Aorta (tissue), 5 donors: ENCODE measurements at regions of chr2 and their contacts with region 1.

Region 1: GRCh38 chr2:197813093-197813787 is 8.8 kb downstream of the PLCL1 start:
- DNase-seq: no peak
- ATAC-seq: no peak
- H3K4me3 ChIP-seq: no peak overlapping the region
- H3K27ac ChIP-seq: no peak overlapping the region
- H3K4me1 ChIP-seq: peaks cover 1 to 11% of the 10 kb centered on the region in 2 donors
- H3K27me3 ChIP-seq: no peaks in the 10 kb centered on the region

Region 2: GRCh38 chr2:197873293-197873701 is 60.1 kb after region 1 on chr2:
- intact Hi-C with region 1: loop called in 1 of 2 experiments (anchors 10 kb)
- DNase-seq: no peak
- ATAC-seq: no peak
- H3K4me3 ChIP-seq: no peak overlapping the region
- H3K27ac ChIP-seq: no peak overlapping the region
- H3K4me1 ChIP-seq: peaks cover 2 to 8% of the 10 kb centered on the region in 2 donors
- H3K27me3 ChIP-seq: no peaks in the 10 kb centered on the region